BJ (cell line): ENCODE measurements at regions of chr11 and their contacts with region 1.

Region 1: GRCh38 chr11:73288873-73289707 is 17.0 kb downstream of the P2RY6 start:
- DNase-seq: no peak
- H3K4me3 ChIP-seq: no peak overlapping the region
- H3K27me3 ChIP-seq: no peaks in the 10 kb centered on the region
- CTCF ChIP-seq: peak; percentile 96

Region 2: GRCh38 chr11:73184953-73185671 is 104.0 kb before region 1 on chr11:
- CTCF ChIA-PET with region 1: interaction called, 183 read pairs
- POLR2A ChIA-PET with region 1: no interaction called
- DNase-seq: no peak
- H3K4me3 ChIP-seq: no peak overlapping the region
- H3K27me3 ChIP-seq: no peaks in the 10 kb centered on the region; the same call in 1 of the 2 replicates
- CTCF ChIP-seq: peak; percentile 90

Region 3: GRCh38 chr11:73242251-73243079 is 46.6 kb before region 1 on chr11:
- CTCF ChIA-PET with region 1: interaction called, 46 read pairs
- POLR2A ChIA-PET with region 1: no interaction called
- DNase-seq: no peak
- H3K4me3 ChIP-seq: no peak overlapping the region
- H3K27me3 ChIP-seq: no peaks in the 10 kb centered on the region
- CTCF ChIP-seq: peak; percentile 98

Region 4: DNA sequence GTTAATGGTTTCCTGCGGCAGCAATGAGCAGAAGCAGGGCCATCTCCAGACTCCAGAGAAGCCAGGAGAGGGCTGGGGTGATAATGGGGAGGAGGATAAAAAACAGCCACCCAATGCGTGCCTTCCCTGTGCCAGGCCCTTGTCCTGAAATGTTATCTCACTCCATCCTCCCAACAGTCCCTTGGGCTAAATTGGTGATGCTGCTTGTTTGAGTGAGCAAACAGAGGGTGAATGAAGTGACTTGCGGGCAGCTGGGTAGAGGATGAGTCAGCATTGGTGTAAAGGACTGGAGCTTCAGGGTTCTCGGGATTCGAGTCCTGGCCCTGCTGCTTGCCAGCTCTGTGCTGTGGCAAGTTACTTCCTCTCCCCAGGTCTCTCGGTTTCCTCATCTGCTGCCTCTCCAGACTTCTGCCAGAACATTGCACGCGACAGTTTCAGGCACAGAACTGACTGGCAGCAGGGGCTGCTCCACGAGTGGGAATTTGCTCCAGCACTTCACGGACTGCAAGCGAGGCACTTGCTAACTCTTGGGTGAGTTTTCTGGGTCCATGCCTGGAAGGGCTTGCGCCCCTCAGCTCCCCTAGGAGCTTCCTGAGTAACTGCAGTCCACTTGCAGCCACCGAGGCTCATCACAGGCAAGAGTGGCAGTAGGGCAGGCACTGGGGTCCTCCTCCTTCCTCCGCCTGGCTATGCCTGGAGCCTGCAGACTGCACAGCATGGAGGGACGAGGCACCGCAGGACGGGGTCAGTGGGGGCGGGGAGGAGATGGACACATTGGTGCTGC is 17.0 kb before region 1 on chr11 and contains the start of gene P2RY6:
- CTCF ChIA-PET with region 1: interaction called, 60 read pairs
- POLR2A ChIA-PET with region 1: no interaction called
- DNase-seq: no peak
- H3K4me3 ChIP-seq: no peak within 1 kb of the TSS
- H3K27me3 ChIP-seq: peaks cover 8% of the 10 kb centered on the region; the same call in 1 of the 2 replicates
- CTCF ChIP-seq: no peak
- polyA plus RNA-seq, gene P2RY6: 0.56 and 1.5 TPM in 2 replicates

Region 5: DNA sequence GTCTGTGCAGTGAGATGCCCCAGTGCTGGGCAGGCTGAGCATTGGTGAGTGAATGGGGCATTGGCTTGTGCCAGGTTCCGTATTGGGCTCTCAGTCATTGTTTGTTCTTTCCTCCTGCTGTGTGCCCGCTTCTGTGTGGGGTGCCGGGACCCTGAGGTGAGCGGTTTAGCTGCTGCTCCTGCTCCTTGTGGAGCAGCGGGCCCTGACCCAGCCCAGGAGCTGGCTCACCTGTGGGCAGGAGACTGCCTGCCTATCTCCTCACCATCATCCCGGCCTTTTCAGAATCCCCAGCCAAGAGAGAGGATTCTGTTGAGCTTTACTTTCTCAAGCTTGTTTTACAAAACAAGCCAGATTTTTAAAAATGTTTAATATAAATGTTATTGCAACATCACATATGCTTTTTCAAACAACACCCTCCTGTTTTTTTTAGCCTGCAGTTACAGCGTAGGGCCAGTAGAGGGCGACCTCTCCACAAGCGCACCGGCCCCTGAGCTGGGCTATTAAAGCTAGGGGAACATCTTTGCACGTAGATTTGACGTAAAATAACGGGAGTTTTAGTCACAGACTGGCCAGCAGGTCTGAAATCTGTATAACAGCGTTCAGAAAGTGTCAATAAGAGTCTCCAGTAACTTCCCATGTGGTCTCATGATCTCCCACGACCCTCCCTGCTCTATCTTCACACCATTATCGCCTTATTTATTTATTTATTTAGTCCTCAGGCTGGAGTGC is 62.0 kb after region 1 on chr11:
- CTCF ChIA-PET with region 1: interaction called, 16 read pairs
- POLR2A ChIA-PET with region 1: no interaction called
- DNase-seq: no peak
- H3K4me3 ChIP-seq: no peak overlapping the region
- H3K27me3 ChIP-seq: no peaks in the 10 kb centered on the region
- CTCF ChIP-seq: peak; percentile 100

Region 6: GRCh38 chr11:73507086-73507485 is 218.0 kb after region 1 on chr11:
- CTCF ChIA-PET with region 1: no interaction called
- POLR2A ChIA-PET with region 1: no interaction called
- DNase-seq: no peak
- H3K4me3 ChIP-seq: no peak overlapping the region
- H3K27me3 ChIP-seq: no peaks in the 10 kb centered on the region
- CTCF ChIP-seq: no peak